Activated T-helper 1 cell treated with anti-CD3 and anti-CD28 coated beads, Interleukin-12 subunit alpha, Interleukin-12 subunit beta, Interleukin-2, Interleukin-4 antibody, amounts not matched to agents 30 ng/mL and 10 ng/mL and 1 ng/mL, durations not matched to agents 14 hours and 24 hours and 36 hours (primary cell): ENCODE measurements at regions of chr9 and their contacts with region 1.

Region 1: GRCh38 chr9:121538246-121538645 is 38.6 kb upstream of the GGTA1 start:
- DNase-seq: no peak
- H3K4me3 Mint-ChIP-seq: no peak overlapping the region
- H3K27ac Mint-ChIP-seq: no peak overlapping the region
- H3K4me1 Mint-ChIP-seq: no peaks in the 10 kb centered on the region
- H3K27me3 Mint-ChIP-seq: peaks cover 5% of the 10 kb centered on the region

Region 2: DNA sequence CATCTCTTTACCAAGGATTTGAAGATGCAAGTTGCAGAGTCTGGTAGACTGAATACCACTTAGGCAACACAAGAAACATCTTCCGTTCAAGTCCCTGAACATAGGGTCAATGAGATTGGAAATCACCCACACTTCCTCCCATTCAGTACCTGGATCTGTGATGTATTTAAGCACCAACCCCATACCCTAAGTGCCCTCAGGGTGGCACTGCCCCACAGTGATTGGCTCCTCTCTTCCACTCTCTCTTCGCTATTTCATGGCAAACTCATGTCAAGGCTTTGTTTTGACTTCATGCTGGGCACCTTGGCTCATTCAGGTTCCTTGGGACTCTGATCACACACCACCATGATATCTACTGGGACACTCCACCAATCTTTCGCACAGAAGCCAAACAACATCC is 92.3 kb before region 1 on chr9:
- intact Hi-C with region 1: loop called (anchors 1 kb)
- DNase-seq: no peak
- H3K4me3 Mint-ChIP-seq: no peak overlapping the region
- H3K27ac Mint-ChIP-seq: no peak overlapping the region
- H3K4me1 Mint-ChIP-seq: peaks cover 15% of the 10 kb centered on the region
- H3K27me3 Mint-ChIP-seq: peaks cover 37% of the 10 kb centered on the region

Region 3: DNA sequence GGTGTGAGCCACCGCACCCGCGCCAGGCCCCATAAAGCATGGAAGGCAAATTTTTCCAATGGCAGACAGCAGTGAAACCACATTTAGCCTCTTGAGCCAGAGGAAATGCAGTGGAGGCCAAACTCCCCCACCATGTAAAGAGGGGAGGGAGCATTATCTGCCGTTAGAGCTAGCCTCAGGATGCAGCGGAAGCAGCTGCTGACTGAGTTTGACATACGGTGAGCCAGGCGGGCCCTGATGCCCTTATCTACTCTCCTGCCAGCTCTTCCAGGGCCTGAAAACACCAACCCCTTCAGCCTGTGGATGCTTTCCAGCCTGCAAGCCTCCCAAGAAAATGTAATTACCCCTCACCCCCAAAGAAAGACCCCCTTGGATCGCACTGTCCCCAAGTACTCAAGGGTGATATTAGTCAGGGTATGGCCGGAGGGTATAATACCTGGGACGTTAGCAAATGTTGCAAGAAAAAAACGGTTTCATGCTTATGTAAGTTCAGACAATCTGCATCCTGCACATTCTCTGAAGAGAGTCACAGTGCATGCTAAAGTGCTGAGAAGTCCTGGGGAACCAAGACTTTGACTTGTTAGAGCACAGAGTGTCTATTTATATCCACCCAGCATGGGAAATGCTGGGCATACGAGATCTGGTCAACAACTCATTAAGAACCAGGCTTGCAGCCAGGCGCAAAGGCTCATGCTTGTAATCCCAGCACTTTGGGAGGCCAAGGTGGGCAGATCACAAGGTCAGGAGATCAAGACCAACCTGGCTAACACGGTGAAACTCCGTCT is 27.3 kb before region 1 on chr9:
- intact Hi-C with region 1: no loop called
- DNase-seq: no peak
- H3K4me3 Mint-ChIP-seq: no peak overlapping the region
- H3K27ac Mint-ChIP-seq: no peak overlapping the region
- H3K4me1 Mint-ChIP-seq: no peaks in the 10 kb centered on the region
- H3K27me3 Mint-ChIP-seq: peaks cover 10% of the 10 kb centered on the region